CD4-positive, alpha-beta memory T cell (primary cell): ENCODE measurements at regions of chr15 and their contacts with region 1.

Region 1: DNA sequence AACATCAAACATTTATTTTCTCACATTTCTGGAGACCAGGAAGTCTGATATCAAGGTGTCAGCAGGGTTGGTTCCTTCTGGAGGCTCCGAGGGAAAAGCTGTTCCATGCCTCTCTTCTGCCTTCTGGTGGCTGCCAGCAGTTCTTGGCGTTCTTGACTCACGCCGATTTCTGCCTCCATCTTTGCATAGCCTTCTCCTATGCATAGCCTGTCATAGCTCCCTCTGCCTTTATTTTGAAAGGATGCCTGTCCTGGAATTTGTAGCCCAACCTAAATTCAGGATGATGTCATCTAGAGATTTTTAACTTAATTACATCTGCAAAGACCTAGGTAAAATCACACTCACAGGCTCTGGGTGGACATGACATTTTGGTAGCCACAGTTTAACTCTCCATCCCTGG is 70.4 kb downstream of the RGMA start:
- DNase-seq: no peak
- H3K4me3 ChIP-seq: no peak overlapping the region
- H3K4me3 Mint-ChIP-seq: no peak overlapping the region
- H3K27ac ChIP-seq: no peak overlapping the region
- H3K27ac Mint-ChIP-seq: peak overlapping the region in 6 of 7 donors; percentile 39 to 88 (median 62)
- H3K4me1 ChIP-seq: peaks cover 24% of the 10 kb centered on the region
- H3K4me1 Mint-ChIP-seq: peaks cover 30 to 66% (median 46%) of the 10 kb centered on the region in 4 donors
- H3K27me3 ChIP-seq: no peaks in the 10 kb centered on the region
- H3K27me3 Mint-ChIP-seq: no peaks in the 10 kb centered on the region

Region 2: DNA sequence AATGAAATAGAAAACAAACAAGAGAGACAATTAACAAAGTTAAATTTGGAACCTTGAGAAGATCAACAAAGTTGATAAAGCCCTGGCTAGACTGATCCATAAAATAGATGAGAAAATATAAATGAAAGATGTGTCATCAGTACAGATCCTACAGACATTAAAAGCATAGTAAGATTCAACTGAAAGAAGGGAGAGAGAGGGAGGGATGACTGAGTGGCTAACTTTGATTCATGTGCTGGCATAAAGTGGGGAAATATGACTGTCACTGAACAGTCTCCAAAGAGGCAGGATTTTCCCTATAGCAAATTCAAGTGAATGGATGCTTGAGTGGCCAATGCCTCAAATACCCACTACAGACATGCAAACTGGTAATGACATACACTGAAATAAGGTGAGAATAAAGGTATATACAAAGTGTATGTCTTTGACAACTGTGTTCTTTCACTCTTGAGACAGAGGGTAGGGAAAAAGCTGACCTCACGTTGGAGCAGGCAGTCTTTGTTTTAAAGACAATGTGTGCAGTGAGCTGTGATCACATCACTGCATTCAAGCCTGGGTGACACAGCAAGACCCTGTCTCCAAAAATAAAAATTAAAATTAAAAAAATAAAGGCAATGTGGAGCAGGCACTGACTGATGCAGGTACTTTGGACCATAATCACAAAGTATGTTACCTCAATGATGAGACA is 154.3 kb before region 1 on chr15:
- CTCF ChIA-PET with region 1: no interaction called
- POLR2A ChIA-PET with region 1: no interaction called
- intact Hi-C with region 1: no loop called
- DNase-seq: no peak
- H3K4me3 ChIP-seq: no peak overlapping the region
- H3K4me3 Mint-ChIP-seq: no peak overlapping the region
- H3K27ac ChIP-seq: no peak overlapping the region
- H3K27ac Mint-ChIP-seq: peak overlapping the region in 1 of 7 donors; percentile 45
- H3K4me1 ChIP-seq: no peaks in the 10 kb centered on the region
- H3K4me1 Mint-ChIP-seq: no peaks in the 10 kb centered on the region
- H3K27me3 ChIP-seq: no peaks in the 10 kb centered on the region
- H3K27me3 Mint-ChIP-seq: no peaks in the 10 kb centered on the region

Region 3: DNA sequence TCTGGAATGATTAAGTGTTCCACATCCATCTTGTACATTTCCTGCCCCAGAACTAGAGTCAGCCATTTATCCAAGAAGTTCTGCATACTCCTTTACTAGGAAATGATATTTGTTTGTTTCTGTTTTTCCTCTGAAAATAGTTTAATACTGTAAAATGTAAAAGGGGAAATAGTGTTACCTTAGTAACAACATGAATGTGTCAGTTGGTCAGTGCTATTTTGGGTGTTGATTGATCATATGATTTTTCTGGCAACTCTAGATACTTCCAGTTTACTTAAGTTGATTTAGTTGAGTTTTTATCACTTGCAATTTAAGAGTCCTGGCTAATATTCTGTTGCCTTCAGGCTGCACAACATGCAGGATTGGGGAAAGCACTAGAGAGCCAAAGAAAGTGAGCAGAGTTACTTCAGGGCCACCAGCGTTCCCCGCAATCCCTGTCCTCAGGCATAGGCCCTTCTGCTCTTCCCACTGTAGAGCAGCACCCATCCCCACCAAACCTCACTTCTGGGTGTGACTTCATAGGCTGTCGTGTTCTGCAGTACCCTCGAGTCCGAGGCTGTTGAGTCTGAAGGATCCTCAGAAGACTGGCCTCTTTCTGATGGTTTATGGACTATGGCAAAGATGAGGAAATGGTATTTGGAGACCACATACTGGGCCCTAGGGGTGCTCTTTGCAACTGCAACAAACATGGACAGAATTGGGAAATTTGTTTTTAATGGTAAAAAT is 49.5 kb before region 1 on chr15:
- CTCF ChIA-PET with region 1: no interaction called
- POLR2A ChIA-PET with region 1: no interaction called
- intact Hi-C with region 1: loop called (anchors 10 kb)
- DNase-seq: no peak
- H3K4me3 ChIP-seq: no peak overlapping the region
- H3K4me3 Mint-ChIP-seq: no peak overlapping the region
- H3K27ac ChIP-seq: no peak overlapping the region
- H3K27ac Mint-ChIP-seq: peak overlapping the region in 6 of 7 donors; percentile 19 to 64 (median 50)
- H3K4me1 ChIP-seq: peaks cover 17% of the 10 kb centered on the region
- H3K4me1 Mint-ChIP-seq: peaks cover 24 to 56% (median 28%) of the 10 kb centered on the region in 4 donors
- H3K27me3 ChIP-seq: no peaks in the 10 kb centered on the region
- H3K27me3 Mint-ChIP-seq: no peaks in the 10 kb centered on the region